Activated B cell treated with CpG ODN at 0.5 μM for 24 hours (primary cell): ENCODE measurements at regions of chr16 and their contacts with region 1.

Region 1: GRCh38 chr16:11757671-11758545 is 15.3 kb upstream of the TXNDC11 start:
- DNase-seq: no peak
- ATAC-seq: no peak
- H3K4me3 Mint-ChIP-seq: no peak overlapping the region
- H3K27ac Mint-ChIP-seq: no peak overlapping the region
- H3K4me1 Mint-ChIP-seq: peaks cover 31% of the 10 kb centered on the region
- H3K27me3 Mint-ChIP-seq: no peaks in the 10 kb centered on the region
- CTCF ChIP-seq: no peak

Region 2: GRCh38 chr16:11682655-11683096 is 75.2 kb before region 1 on chr16:
- CTCF ChIA-PET with region 1: no interaction called
- POLR2A ChIA-PET with region 1: interaction called, 11 read pairs
- intact Hi-C with region 1: no loop called
- DNase-seq: peak; percentile 9
- ATAC-seq: peak; percentile 22
- H3K4me3 Mint-ChIP-seq: peak overlapping the region; percentile 61
- H3K27ac Mint-ChIP-seq: peak overlapping the region; percentile 88
- H3K4me1 Mint-ChIP-seq: peaks cover 98% of the 10 kb centered on the region
- H3K27me3 Mint-ChIP-seq: no peaks in the 10 kb centered on the region
- CTCF ChIP-seq: no peak

Region 3: DNA sequence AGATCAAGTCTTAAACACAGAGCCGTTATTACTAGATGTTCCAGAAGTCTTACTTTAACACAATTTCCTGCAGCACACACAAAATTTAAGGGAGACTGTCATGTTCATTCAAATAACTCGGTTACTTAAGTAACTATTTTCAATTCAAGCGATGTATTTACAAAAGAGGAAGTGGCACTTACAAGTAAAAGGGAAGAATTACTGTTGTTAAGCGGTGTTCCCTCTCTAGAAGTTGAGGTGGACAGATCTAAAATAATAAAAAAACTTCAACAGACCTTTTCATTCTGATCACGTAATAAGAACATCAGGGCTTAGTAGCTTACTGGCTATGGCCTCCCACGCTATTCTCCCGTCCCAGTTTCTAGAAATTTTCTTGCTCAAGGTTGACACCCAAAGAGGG is 10.9 kb after region 1 on chr16:
- CTCF ChIA-PET with region 1: interaction called, 3 read pairs
- POLR2A ChIA-PET with region 1: interaction called, 18 read pairs
- intact Hi-C with region 1: loop called (anchors 1 kb)
- DNase-seq: no peak
- ATAC-seq: peak; percentile 79
- H3K4me3 Mint-ChIP-seq: peak overlapping the region; percentile 61
- H3K27ac Mint-ChIP-seq: peak overlapping the region; percentile 90
- H3K4me1 Mint-ChIP-seq: peaks cover 50% of the 10 kb centered on the region
- H3K27me3 Mint-ChIP-seq: no peaks in the 10 kb centered on the region
- CTCF ChIP-seq: no peak

Region 4: DNA sequence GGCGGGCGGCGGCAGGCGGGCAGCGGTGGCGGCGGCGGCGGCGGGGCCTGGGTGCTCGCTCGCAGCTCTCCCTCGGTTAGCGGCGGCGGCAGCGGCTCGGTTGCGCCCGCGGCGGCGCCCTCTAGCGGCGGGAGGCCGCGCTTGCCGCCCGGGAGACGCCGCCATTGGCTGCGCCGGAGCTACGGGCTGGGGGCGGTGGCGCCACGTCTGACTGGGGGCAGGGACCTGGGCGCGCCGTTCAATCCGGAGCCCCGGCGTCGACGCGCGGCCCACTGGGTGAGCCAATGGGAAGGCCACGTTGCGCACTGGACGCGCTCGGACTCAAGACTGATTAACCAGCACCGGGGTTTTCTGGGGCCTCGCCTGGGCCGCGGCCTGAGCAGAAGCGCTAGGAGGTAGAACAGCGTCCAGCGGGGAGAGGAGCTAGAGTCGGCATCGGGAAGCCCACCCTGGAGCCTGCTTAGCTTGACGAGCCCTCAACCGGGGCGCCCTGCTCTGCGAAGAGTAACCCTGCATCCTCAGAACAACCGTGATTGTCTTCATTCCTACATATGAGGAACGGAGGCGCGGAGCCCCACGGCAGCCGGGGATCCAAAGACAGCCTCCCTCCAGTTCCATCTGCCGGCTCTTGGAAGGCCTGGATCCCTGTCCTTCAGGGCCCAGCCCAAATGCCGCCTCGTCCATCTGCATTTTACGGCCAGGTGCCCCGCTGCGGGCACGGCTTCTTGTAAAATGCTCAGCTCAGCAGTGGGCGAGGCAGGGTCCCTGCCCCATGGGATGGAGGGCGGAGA is 39.5 kb after region 1 on chr16 and contains the start of gene ZC3H7A:
- CTCF ChIA-PET with region 1: interaction called, 13 read pairs
- POLR2A ChIA-PET with region 1: interaction called, 51 read pairs
- intact Hi-C with region 1: loop called (anchors 1 kb)
- DNase-seq: peak; percentile 94
- ATAC-seq: peak; percentile 97
- H3K4me3 Mint-ChIP-seq: peak within 1 kb of the TSS; percentile 95
- H3K27ac Mint-ChIP-seq: peak within 1 kb of the TSS; percentile 96
- H3K4me1 Mint-ChIP-seq: peaks cover 73% of the 10 kb centered on the region
- H3K27me3 Mint-ChIP-seq: no peaks in the 10 kb centered on the region
- CTCF ChIP-seq: no peak
- total RNA-seq, gene ZC3H7A: 143 and 163 TPM in 2 replicates